CD4-positive, alpha-beta T cell (primary cell): ENCODE measurements at regions of chr4 and their contacts with region 1.

Region 1: DNA sequence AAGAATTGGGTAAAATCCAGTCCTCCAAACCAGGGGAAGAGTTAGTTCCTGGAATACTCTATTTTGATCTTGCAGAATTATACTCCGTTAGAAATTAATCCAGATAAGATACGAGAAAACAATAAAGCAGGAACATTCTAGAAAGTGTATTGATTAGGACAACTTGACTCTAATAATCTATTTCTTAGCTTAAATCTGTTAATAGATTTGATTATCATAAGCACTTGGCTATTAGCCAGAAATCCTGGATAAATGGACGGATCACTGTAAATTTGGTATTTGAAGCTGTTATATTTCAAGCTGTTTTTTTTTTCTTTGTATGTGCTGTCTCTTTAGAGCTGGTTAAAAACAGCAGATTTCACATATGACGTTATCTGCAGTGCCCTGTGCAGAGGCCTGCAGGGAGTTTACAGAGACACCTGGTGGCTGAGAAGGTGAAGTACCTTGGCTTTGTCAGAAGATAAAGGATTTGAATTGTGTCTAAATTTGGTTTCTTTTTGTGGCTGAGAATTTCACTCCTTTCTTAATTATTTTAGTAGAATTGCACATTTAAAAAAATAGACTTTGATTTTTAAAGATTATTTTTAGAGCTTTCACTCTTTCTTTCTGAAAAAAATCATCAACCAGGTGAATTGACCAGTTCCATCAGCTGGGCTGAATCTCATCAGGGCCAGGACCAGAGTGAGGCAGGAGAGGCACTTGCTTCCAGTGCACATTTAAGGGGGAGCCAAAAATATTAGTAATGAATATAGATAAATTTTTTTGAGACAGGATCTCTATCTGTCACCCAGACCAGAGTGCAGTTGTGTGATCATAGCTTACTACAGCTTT is 9.7 kb upstream of the CHRNA9 start:
- DNase-seq: peak; percentile 46 to 89 (median 56)
- ATAC-seq: peak; percentile 100
- H3K4me3 ChIP-seq: no peak overlapping the region
- H3K4me3 Mint-ChIP-seq: no peak overlapping the region
- H3K27ac ChIP-seq: no peak overlapping the region
- H3K27ac Mint-ChIP-seq: peak overlapping the region; percentile 6
- H3K4me1 ChIP-seq: no peaks in the 10 kb centered on the region
- H3K4me1 Mint-ChIP-seq: peaks cover 21% of the 10 kb centered on the region
- H3K27me3 ChIP-seq: no peaks in the 10 kb centered on the region
- H3K27me3 Mint-ChIP-seq: no peaks in the 10 kb centered on the region
- CTCF ChIP-seq: peak; percentile 89

Region 2: DNA sequence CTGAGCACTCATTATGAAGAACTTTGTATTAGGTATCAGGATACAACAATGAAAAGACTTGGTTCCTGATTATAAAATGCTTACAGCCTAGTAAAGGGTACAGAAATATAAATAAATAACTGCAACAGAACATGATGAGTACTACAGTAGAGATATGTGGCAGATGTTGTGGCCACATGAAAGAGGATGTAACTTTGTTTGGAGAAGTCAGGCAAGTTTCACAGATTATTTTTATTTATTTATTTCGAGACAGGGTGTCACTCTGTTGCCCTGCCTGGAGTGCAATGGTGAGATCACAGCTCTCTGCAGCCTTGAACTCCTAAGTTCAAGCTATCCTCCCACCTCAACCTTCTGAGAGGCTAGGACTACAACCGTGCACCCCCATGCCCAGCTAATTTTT is 643.3 kb before region 1 on chr4:
- CTCF ChIA-PET with region 1: no interaction called
- POLR2A ChIA-PET with region 1: interaction called, 3 read pairs
- intact Hi-C with region 1: loop called in 1 of 2 experiments (anchors 10 kb)
- DNase-seq: no peak
- ATAC-seq: no peak
- H3K4me3 ChIP-seq: no peak overlapping the region
- H3K4me3 Mint-ChIP-seq: no peak overlapping the region
- H3K27ac ChIP-seq: no peak overlapping the region
- H3K27ac Mint-ChIP-seq: no peak overlapping the region
- H3K4me1 ChIP-seq: no peaks in the 10 kb centered on the region
- H3K4me1 Mint-ChIP-seq: no peaks in the 10 kb centered on the region
- H3K27me3 ChIP-seq: no peaks in the 10 kb centered on the region
- H3K27me3 Mint-ChIP-seq: peaks cover 8% of the 10 kb centered on the region
- CTCF ChIP-seq: no peak

Region 3: DNA sequence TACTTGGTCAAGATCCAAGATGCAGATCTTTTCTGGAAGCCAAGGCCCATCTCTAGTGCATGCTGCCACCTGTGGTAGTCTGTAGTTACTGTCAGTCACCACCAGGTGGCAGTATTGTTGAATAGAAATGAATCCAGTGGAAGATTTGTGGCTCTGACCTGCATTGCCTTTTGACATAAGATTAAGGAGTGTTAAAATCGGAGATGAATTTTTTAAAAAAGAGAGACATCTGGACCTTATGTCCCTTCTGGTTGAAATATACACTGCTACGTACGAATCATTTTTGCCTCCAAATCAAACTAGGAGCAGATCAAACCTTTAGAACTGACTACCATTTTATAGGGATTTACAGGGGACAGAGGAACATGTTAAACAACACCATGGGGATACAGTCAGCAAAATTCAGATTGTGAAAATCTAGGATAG is 175.4 kb before region 1 on chr4:
- CTCF ChIA-PET with region 1: interaction called, 48 read pairs
- POLR2A ChIA-PET with region 1: interaction called, 14 read pairs
- intact Hi-C with region 1: loop called (anchors 1 kb)
- DNase-seq: peak; percentile 51 to 89 (median 61)
- ATAC-seq: peak; percentile 88
- H3K4me3 ChIP-seq: no peak overlapping the region
- H3K4me3 Mint-ChIP-seq: no peak overlapping the region
- H3K27ac ChIP-seq: no peak overlapping the region
- H3K27ac Mint-ChIP-seq: peak overlapping the region; percentile 66
- H3K4me1 ChIP-seq: peaks cover 2% of the 10 kb centered on the region
- H3K4me1 Mint-ChIP-seq: peaks cover 45% of the 10 kb centered on the region
- H3K27me3 ChIP-seq: no peaks in the 10 kb centered on the region
- H3K27me3 Mint-ChIP-seq: no peaks in the 10 kb centered on the region
- CTCF ChIP-seq: peak; percentile 89

Region 4: DNA sequence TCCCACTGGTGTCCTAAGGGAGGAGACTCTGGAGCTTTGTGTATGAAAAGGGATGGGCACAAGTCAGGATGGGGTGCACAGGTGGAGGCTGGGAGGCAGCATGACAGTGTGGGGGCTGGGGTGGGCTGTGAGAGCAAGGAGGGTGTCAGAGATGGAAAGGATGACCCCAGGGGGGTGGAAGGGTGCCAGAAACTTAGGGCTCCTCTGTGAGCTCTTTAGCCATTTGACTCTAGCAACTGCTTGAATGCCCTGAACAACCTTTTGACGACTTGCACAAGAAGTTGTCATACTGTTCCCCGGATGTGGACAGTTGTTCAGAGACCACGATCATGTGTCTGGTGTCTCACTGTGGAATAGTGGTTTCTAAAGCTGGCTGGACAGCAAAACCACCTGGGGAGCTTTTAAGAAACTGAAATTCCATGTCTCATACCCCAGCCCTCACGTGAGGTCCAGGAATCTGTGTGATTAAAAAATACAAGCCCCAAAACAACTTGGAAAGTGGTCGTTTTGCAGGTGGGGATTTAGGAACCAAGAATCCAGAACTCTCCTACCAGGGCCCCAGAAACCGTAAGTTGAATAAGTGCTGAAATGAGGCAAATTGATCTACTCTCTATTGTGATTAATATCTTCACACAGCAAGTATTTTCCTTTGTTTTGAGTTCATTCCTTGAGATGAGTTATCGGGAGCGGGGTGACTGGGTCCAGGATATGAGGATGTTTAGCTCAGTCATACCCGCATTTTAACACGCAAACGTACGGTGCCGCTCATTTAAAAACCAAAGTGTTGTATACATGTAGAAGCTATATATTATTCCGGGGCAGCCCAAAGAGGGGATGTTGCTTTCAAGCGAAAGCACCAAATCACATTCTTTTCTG is 125.2 kb before region 1 on chr4:
- CTCF ChIA-PET with region 1: interaction called, 26 read pairs
- POLR2A ChIA-PET with region 1: interaction called, 6 read pairs
- intact Hi-C with region 1: no loop called
- DNase-seq: peak in 10 of 14 experiments; percentile 31 to 90 (median 50)
- ATAC-seq: peak; percentile 18
- H3K4me3 ChIP-seq: peak overlapping the region; percentile 74
- H3K4me3 Mint-ChIP-seq: peak overlapping the region; percentile 100
- H3K27ac ChIP-seq: peak overlapping the region; percentile 93 to 99
- H3K27ac Mint-ChIP-seq: peak overlapping the region; percentile 99
- H3K4me1 ChIP-seq: peaks cover 33% of the 10 kb centered on the region
- H3K4me1 Mint-ChIP-seq: peaks cover 46% of the 10 kb centered on the region
- H3K27me3 ChIP-seq: no peaks in the 10 kb centered on the region
- H3K27me3 Mint-ChIP-seq: no peaks in the 10 kb centered on the region
- CTCF ChIP-seq: no peak

Region 5: GRCh38 chr4:40212674-40213527 is 112.5 kb before region 1 on chr4:
- CTCF ChIA-PET with region 1: interaction called, 16 read pairs
- POLR2A ChIA-PET with region 1: interaction called, 7 read pairs
- intact Hi-C with region 1: no loop called
- DNase-seq: peak in 1 of 14 experiments; percentile 26
- ATAC-seq: no peak
- H3K4me3 ChIP-seq: peak overlapping the region; percentile 25
- H3K4me3 Mint-ChIP-seq: peak overlapping the region; percentile 71
- H3K27ac ChIP-seq: peak overlapping the region; percentile 73 to 85
- H3K27ac Mint-ChIP-seq: peak overlapping the region; percentile 99
- H3K4me1 ChIP-seq: peaks cover 74% of the 10 kb centered on the region
- H3K4me1 Mint-ChIP-seq: peaks cover 94% of the 10 kb centered on the region
- H3K27me3 ChIP-seq: no peaks in the 10 kb centered on the region
- H3K27me3 Mint-ChIP-seq: no peaks in the 10 kb centered on the region
- CTCF ChIP-seq: no peak

Region 6: GRCh38 chr4:40238700-40239548 is 86.5 kb before region 1 on chr4:
- CTCF ChIA-PET with region 1: interaction called, 18 read pairs
- POLR2A ChIA-PET with region 1: interaction called, 3 read pairs
- intact Hi-C with region 1: no loop called
- DNase-seq: peak; percentile 50 to 95 (median 69)
- ATAC-seq: peak; percentile 93
- H3K4me3 ChIP-seq: peak overlapping the region; percentile 46
- H3K4me3 Mint-ChIP-seq: peak overlapping the region; percentile 55
- H3K27ac ChIP-seq: peak overlapping the region; percentile 79 to 97
- H3K27ac Mint-ChIP-seq: peak overlapping the region; percentile 93
- H3K4me1 ChIP-seq: peaks cover 99% of the 10 kb centered on the region
- H3K4me1 Mint-ChIP-seq: peaks cover 92% of the 10 kb centered on the region
- H3K27me3 ChIP-seq: no peaks in the 10 kb centered on the region
- H3K27me3 Mint-ChIP-seq: no peaks in the 10 kb centered on the region
- CTCF ChIP-seq: no peak